Heart right ventricle (tissue), 16 donors: ENCODE measurements at regions of chr5 and their contacts with region 1.

Region 1: DNA sequence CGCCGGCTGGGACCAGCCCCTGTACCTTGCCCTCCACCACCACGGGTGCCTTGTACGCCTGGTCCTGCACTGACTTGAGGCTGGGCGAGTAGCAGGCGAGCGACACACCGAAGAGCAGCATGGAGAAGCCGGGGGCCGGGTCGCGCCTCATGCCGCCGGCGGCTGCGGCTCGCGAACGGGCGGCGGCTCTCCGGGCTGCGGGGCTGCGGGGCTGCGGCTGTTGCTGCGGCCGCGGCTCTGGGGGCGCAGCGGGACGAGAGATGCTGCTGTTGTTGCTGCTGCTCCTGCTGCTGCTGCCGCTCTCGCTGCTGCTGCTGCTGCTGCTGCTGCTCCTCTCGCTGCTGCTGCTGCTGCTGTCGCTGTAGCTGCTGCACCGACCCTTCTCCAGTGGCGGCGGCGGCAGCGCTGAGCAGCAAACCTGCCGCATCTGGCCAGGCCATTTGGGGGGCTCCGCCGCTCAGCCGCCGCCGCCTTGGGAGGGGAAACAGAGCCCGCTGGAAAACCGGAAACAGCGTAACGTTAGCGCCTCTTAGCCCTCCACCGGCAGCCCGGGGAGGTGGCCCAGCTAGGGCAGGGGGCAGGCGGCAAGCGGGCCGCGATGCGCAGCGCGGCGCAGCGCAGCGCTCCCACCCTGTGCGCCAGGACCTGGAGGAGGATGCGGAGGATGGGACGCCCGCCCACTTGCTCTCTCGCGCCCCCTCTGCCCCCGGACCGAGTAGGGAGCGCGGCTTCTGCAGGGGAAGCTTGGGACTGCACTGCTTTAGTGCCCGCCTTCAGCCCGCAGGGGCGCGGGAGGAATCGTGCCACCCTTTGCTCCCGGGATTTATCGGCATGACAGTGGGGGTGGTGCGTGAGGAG is at the start of gene NRG2:
- DNase-seq: peak; percentile 77 to 81
- ATAC-seq: peak; percentile 83 to 92 (median 90)
- H3K4me3 ChIP-seq: peak within 1 kb of the TSS; percentile 12 to 86 (median 70)
- H3K27ac ChIP-seq: peak within 1 kb of the TSS; percentile 46 to 89 (median 82)
- H3K4me1 ChIP-seq: peaks cover 0 to 53% (median 47%) of the 10 kb centered on the region in 9 donors
- H3K27me3 ChIP-seq: peaks cover 0 to 59% (median 0%) of the 10 kb centered on the region in 7 donors
- CTCF ChIP-seq: peak; percentile 48 to 74 (median 56)
- total RNA-seq, gene NRG2: 1.0 to 6.6 (median 2.9) TPM

Region 2: DNA sequence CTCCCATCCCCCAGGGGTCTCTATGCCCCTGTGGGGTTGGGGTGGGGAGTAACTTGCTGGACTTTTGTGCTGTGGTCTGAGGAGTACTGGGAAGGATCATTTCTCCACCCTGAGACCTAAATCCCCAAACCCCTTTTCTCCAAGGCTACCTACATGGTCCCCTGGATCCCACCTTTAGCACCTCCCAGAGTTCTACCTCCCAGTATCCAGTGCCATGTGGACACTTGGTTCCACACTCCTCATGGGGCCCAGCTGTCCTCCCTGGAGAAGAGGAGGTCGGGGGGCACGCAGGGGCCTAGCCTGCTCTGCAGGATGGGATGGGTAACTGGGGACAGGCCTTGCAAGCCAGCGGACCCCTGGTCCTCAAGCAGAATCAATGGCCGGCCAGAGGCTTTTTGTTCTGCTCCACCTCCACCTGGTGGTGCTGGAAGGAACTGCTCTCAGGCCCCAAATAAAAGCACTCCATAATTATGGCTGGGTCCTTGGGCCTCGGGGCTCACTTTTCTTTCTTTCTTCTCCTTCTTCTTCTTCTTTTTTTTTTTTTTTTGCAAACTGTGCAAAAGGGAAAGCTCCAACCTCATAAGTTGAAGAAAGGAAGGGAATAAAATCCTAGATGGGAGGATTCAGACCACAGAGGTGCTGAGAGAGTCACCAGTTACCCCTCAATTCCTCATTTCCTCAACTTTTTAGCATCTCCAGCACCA is 178.9 kb before region 1 on chr5:
- intact Hi-C with region 1: loop called in 1 of 10 experiments (anchors 10 kb)
- DNase-seq: peak; percentile 48 to 65
- ATAC-seq: peak; percentile 43 to 86 (median 77)
- H3K4me3 ChIP-seq: no peak overlapping the region
- H3K27ac ChIP-seq: peak overlapping the region in 4 of 10 donors; percentile 11 to 49 (median 24)
- H3K4me1 ChIP-seq: peaks cover 0 to 23% (median 11%) of the 10 kb centered on the region in 9 donors
- H3K27me3 ChIP-seq: no peaks in the 10 kb centered on the region
- CTCF ChIP-seq: peak; percentile 81 to 92 (median 89)

Region 3: GRCh38 chr5:139974661-139975060 is 68.2 kb before region 1 on chr5:
- intact Hi-C with region 1: loop called in 3 of 10 experiments (anchors 5 to 10 kb)
- DNase-seq: peak in 1 of 2 donors; percentile 2
- ATAC-seq: peak in 4 of 8 donors; percentile 18 to 55 (median 47)
- H3K4me3 ChIP-seq: no peak overlapping the region
- H3K27ac ChIP-seq: no peak overlapping the region
- H3K4me1 ChIP-seq: peaks cover 0 to 42% (median 8%) of the 10 kb centered on the region in 9 donors
- H3K27me3 ChIP-seq: no peaks in the 10 kb centered on the region
- CTCF ChIP-seq: no peak

Region 4: DNA sequence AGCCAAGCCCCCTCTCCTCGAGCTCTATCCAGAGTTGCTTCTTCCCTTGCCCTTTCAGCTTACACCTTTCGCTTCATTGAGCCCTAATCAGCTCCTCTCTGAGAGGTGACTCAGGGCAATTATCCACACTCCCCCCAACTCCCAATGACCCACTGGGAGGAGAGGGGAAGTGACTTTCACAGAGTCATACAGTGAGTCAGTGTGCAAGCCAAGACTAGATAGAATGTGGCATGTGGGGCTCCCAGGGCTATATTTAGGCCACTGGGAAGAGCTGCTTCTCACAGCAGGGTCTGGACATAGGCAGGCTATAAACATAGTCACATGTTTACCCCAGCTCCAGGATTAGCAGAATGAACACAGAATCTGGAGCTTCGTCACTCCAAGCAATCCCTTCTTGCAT is 57.1 kb before region 1 on chr5:
- intact Hi-C with region 1: loop called in 1 of 10 experiments (anchors 10 kb)
- DNase-seq: peak in 1 of 2 donors; percentile 44
- ATAC-seq: peak; percentile 78 to 96 (median 90)
- H3K4me3 ChIP-seq: no peak overlapping the region
- H3K27ac ChIP-seq: peak overlapping the region in 9 of 10 donors; percentile 24 to 81 (median 57)
- H3K4me1 ChIP-seq: peaks cover 0 to 45% (median 29%) of the 10 kb centered on the region in 9 donors
- H3K27me3 ChIP-seq: no peaks in the 10 kb centered on the region
- CTCF ChIP-seq: no peak

Region 5: GRCh38 chr5:140000332-140000731 is 42.5 kb before region 1 on chr5:
- intact Hi-C with region 1: loop called in 1 of 10 experiments (anchors 5 kb)
- DNase-seq: peak; percentile 33 to 72
- ATAC-seq: peak; percentile 60 to 92 (median 84)
- H3K4me3 ChIP-seq: peak overlapping the region in 3 of 10 donors; percentile 0 to 17 (median 6)
- H3K27ac ChIP-seq: peak overlapping the region; percentile 26 to 81 (median 64)
- H3K4me1 ChIP-seq: peaks cover 0 to 47% (median 11%) of the 10 kb centered on the region in 9 donors
- H3K27me3 ChIP-seq: peaks cover 0 to 23% (median 0%) of the 10 kb centered on the region in 7 donors
- CTCF ChIP-seq: no peak

Region 6: GRCh38 chr5:140113699-140114263 is 70.9 kb after region 1 on chr5 and contains the start of gene PURA:
- intact Hi-C with region 1: no loop called
- DNase-seq: peak; percentile 97
- ATAC-seq: peak; percentile 90 to 97 (median 96)
- H3K4me3 ChIP-seq: peak within 1 kb of the TSS; percentile 55 to 89 (median 76)
- H3K27ac ChIP-seq: peak within 1 kb of the TSS; percentile 74 to 95 (median 90)
- H3K4me1 ChIP-seq: peaks cover 3 to 84% (median 75%) of the 10 kb centered on the region in 9 donors
- H3K27me3 ChIP-seq: peaks cover 0 to 25% (median 0%) of the 10 kb centered on the region in 7 donors
- CTCF ChIP-seq: peak in 7 of 9 donors; percentile 16 to 54 (median 29)
- total RNA-seq, gene PURA: 19.4 to 27.7 (median 24.5) TPM

Region 7: DNA sequence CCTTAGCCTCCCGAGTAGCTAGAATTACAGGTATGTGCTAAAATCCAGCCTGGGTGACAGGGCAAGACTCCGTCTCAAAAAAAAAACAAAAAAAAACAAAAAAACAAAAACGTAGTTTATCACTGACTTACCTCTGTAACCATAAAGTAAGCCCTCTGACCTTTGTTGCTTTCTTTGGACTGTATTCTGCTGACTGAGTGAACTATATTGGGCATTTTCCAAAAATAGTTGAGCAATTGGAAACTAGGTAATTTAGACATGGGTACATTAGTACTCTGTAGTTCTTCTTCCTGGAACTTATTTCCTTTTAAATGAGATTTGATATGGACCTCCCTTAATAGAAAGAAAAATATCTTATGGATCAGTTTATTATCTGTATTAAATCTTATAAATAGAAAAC is 425.3 kb after region 1 on chr5:
- intact Hi-C with region 1: no loop called
- DNase-seq: no peak
- ATAC-seq: peak in 3 of 8 donors; percentile 59 to 75 (median 62)
- H3K4me3 ChIP-seq: no peak overlapping the region
- H3K27ac ChIP-seq: no peak overlapping the region
- H3K4me1 ChIP-seq: peaks cover 0 to 14% (median 0%) of the 10 kb centered on the region in 9 donors
- H3K27me3 ChIP-seq: no peaks in the 10 kb centered on the region
- CTCF ChIP-seq: no peak